Breast epithelium (tissue), 4 donors: ENCODE measurements at regions of chr1 and their contacts with region 1.

Region 1: DNA sequence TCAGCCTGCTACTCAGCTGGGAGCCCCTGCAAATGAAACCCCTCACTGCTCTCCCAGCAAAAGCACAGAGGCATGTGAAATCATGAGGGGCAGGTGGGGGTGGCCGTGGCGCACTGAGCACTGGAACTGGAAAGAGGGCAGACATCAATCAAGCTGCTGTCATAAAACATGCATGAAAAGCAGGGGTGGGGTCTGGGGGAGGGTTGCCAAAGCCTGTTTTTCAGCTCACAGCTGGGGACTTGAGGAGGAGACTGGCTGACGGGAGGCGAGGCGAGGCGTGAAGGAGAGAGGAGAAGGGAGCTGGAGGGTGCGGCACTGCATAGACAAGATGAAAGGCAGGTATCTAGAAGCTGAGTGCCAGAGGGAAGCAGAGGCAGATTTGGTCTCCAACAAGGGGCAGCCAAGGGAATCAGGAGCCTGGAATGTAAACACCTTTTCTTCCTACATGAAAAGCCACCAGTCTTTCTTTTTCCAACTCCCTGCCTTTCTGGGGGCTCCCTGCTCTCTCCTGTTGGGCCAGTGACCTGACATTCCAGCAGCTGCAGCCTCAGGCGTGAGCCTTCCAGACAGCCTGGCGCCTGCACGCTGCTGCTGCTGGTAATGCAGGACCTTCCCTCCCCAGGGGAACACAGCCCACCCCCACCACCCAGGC is 87.0 kb downstream of the NMNAT2 start:
- DNase-seq: no peak
- H3K4me3 ChIP-seq: no peak overlapping the region
- H3K27ac ChIP-seq: no peak overlapping the region
- H3K4me1 ChIP-seq: no peaks in the 10 kb centered on the region
- H3K27me3 ChIP-seq: no peaks in the 10 kb centered on the region
- CTCF ChIP-seq: no peak
- POLR2A ChIP-seq: no peak

Region 2: GRCh38 chr1:183195142-183195574 is 136.1 kb before region 1 on chr1:
- intact Hi-C with region 1: no loop called
- DNase-seq: no peak
- H3K4me3 ChIP-seq: no peak overlapping the region
- H3K27ac ChIP-seq: no peak overlapping the region
- H3K4me1 ChIP-seq: no peaks in the 10 kb centered on the region
- H3K27me3 ChIP-seq: no peaks in the 10 kb centered on the region
- CTCF ChIP-seq: no peak
- POLR2A ChIP-seq: no peak

Region 3: DNA sequence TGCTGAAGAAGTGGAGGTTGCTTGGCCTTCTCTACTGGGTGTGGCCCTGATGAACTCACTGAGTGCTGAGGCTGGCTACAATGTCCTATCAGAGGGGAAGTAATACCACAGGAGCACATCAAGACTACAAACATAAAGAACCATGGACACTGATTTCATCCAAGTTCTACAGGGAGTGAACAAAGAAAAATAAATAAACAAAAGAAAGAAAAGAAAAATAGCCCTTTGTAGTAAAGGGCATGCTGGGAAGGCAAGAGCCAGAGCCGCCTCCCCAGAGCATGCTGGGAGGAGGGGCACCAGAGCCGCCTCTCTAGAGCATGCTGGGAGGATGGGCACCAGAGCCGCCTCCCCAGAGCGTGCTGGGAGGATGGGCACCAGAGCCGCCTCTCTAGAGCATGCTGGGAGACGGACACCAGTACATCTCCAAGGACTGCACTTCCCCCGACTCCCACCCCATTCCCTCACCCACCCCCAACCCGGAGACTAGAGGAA is 79.2 kb before region 1 on chr1:
- intact Hi-C with region 1: loop called (anchors 2 kb)
- DNase-seq: no peak
- H3K4me3 ChIP-seq: no peak overlapping the region
- H3K27ac ChIP-seq: no peak overlapping the region
- H3K4me1 ChIP-seq: no peaks in the 10 kb centered on the region
- H3K27me3 ChIP-seq: no peaks in the 10 kb centered on the region
- CTCF ChIP-seq: no peak
- POLR2A ChIP-seq: no peak

Region 4: GRCh38 chr1:183281553-183282091 is 49.6 kb before region 1 on chr1:
- intact Hi-C with region 1: no loop called
- DNase-seq: peak; percentile 92
- H3K4me3 ChIP-seq: peak overlapping the region in 2 of 3 donors; percentile 17 to 39
- H3K27ac ChIP-seq: peak overlapping the region; percentile 77 to 86
- H3K4me1 ChIP-seq: peaks cover 4 to 13% of the 10 kb centered on the region in 2 donors
- H3K27me3 ChIP-seq: no peaks in the 10 kb centered on the region
- CTCF ChIP-seq: peak; percentile 87 to 93 (median 89)
- POLR2A ChIP-seq: no peak